K562 (cell line): ENCODE measurements at regions of chr1 and their contacts with region 1.

Region 1: GRCh38 chr1:99754055-99754626 is 12.3 kb downstream of the FRRS1 start:
- DNase-seq: no peak
- ATAC-seq: peak; percentile 16; the same call in 1 of the 3 replicates
- H3K4me3 ChIP-seq: no peak overlapping the region
- H3K27ac ChIP-seq: no peak overlapping the region
- H3K4me1 ChIP-seq: peaks cover 4 to 24% of the 10 kb centered on the region in 2 experiments; a peak in 4 of 5 replicates
- H3K27me3 ChIP-seq: no peaks in the 10 kb centered on the region
- CTCF ChIP-seq: no peak
- EP300 ChIP-seq: no peak
- POLR2A ChIP-seq: no peak
- RAD21 ChIP-seq: no peak

Region 2: DNA sequence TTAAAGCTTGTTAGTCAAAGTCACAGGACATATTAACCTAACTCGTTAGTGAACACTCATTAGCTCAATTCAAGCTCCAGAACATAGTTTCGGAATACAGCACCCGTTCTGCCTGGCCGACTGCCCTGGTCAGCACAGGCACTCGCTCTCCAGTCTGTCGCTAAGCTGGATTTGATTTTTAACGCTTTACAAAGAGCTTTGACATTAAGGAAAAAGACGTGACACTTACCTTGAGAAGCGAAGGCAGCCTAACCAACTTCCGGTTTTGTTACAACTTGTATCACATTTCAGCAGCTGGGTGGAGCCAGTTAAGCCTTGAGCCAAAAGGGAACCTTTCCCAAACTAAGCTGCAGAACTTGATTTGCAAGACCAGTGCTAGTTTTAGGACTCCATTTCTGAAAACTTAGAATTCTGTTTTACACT is 12.2 kb after region 1 on chr1 and contains the start of gene FRRS1:
- CTCF ChIA-PET with region 1: no interaction called
- POLR2A ChIA-PET with region 1: interaction called, 17 read pairs
- in situ Hi-C with region 1: no loop called
- intact Hi-C with region 1: no loop called
- DNase-seq: peak; percentile 53 to 94 (median 64)
- ATAC-seq: peak; percentile 75
- H3K4me3 ChIP-seq: peak within 1 kb of the TSS; percentile 78
- H3K27ac ChIP-seq: peak within 1 kb of the TSS; percentile 99
- H3K4me1 ChIP-seq: peaks cover 14 to 38% of the 10 kb centered on the region in 2 experiments
- H3K27me3 ChIP-seq: no peaks in the 10 kb centered on the region
- CTCF ChIP-seq: peak in 1 of 3 experiments; percentile 7; a peak in 1 of 6 replicates
- EP300 ChIP-seq: peak; percentile 45; the same call in 1 of the 2 replicates
- POLR2A ChIP-seq: peak; percentile 80
- RAD21 ChIP-seq: no peak
- polyA plus RNA-seq, gene FRRS1: 0.87 to 1.9 TPM

Region 3: DNA sequence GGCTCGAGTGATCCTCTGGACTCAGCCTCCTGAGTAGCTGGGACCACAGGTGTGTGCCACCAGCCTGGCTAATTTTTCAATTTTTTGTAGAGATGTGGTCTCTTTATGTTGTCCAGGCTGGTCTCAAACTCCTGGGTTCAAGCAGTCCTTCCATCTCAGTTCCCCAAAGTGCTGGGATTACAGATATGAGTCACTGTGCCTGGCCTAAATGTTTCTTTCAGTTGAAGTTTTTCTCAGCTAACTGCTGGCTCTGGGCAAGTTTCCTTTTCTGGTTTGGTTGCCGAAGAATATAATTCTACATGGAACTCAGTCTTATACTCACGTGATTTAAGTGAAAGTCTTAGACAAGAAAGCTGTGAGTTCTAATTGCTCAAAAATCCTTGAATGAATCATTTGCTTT is 321.6 kb after region 1 on chr1:
- CTCF ChIA-PET with region 1: no interaction called
- POLR2A ChIA-PET with region 1: no interaction called
- in situ Hi-C with region 1: no loop called
- intact Hi-C with region 1: no loop called
- DNase-seq: no peak
- ATAC-seq: no peak
- H3K4me3 ChIP-seq: no peak overlapping the region
- H3K27ac ChIP-seq: no peak overlapping the region
- H3K4me1 ChIP-seq: no peaks in the 10 kb centered on the region
- H3K27me3 ChIP-seq: no peaks in the 10 kb centered on the region
- CTCF ChIP-seq: no peak
- EP300 ChIP-seq: no peak
- POLR2A ChIP-seq: no peak
- RAD21 ChIP-seq: no peak